Common myeloid progenitor, CD34-positive (primary cell): ENCODE measurements at regions of chr7 and their contacts with region 1.

Region 1: DNA sequence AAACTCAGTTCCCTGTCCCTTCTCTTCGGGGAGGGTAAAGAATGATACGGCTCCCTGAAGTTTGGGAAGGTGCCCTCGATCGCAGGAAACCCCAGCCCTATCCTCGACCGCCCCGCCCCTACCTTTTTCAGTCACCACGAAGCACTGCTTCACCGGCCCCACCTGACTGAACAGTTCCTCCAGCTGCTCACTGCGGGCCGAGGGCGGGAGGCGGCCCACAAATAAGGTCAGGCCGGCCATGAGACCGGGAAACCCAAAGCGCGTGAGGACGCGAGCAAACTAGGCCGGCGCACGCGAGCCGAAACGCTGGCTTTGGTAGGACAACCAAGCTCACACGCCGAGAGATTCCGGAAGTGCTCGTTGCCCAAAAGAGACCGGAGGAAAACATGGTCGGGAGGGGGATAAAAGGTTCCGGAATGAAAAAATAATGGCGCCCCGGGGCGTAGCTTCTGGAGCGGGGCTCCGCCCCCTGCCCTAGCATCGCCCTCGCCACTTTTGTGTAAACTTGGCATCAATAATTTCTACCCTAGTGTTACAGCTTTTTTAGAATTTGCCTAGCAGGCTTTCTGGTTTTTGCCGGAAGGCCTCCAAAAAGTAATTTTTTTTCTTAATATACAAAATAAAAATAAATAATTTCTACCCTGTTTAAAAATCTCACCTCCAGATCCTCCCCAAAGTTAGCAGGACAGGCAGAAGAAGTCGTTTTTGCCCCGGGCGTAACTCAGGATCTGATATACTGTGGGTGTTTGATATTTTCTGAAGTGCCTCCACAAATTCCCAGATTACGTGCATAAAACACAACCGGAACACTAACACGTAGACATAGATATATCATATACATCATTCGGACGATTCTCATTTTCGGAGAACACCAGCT is at the start of gene RBM28:
- DNase-seq: peak; percentile 94 to 97 (median 97)
- H3K4me3 ChIP-seq: peak within 1 kb of the TSS; percentile 47 to 96 (median 90)
- H3K27ac ChIP-seq: peak within 1 kb of the TSS; percentile 72 to 92
- H3K4me1 ChIP-seq: peaks cover 12 to 27% (median 17%) of the 10 kb centered on the region in 4 experiments
- H3K27me3 ChIP-seq: peaks cover 0 to 3% (median 1%) of the 10 kb centered on the region in 5 experiments

Region 2: GRCh38 chr7:128104035-128104742 is 239.6 kb before region 1 on chr7:
- CTCF ChIA-PET with region 1: no interaction called
- POLR2A ChIA-PET with region 1: no interaction called
- DNase-seq: peak in 2 of 3 donors; percentile 54 to 65
- H3K4me3 ChIP-seq: peak overlapping the region in 6 of 7 experiments; percentile 2 to 53 (median 32)
- H3K27ac ChIP-seq: no peak overlapping the region
- H3K4me1 ChIP-seq: peaks cover 9 to 34% (median 24%) of the 10 kb centered on the region in 4 experiments
- H3K27me3 ChIP-seq: peaks cover 0 to 61% (median 17%) of the 10 kb centered on the region in 5 experiments

Region 3: DNA sequence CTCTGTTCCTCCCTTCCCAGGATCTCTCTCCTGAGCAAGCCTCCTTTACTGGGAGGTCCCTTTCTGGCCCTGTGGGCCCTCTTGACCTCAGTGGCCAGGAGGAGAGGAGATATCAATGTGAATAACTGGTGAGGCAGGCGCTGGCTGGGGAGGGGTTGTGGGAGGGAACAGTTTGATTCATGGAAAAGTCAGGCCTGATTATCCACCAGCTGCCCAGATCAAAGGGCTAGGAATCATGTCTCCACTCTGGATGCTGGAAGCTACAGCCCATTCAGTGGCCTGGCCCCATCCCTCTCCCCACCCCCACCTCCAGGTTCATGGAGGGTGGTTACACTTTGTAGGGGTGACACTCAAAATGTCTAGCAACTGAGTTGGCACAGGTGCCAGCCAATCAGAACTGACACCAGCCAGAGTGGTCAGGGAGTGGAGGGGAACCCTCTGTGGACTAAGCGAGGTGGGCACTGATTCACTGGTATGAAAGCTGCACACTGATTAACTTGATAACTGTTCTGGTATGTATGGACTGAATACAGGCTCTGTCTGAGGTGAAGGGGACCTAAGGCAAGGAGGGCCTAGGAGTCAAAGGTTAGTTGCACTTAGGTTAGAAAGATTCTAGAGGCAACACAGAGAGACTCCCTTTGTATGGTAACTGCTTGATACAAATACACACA is 12.9 kb after region 1 on chr7:
- CTCF ChIA-PET with region 1: interaction called, 16 read pairs
- POLR2A ChIA-PET with region 1: no interaction called
- DNase-seq: no peak
- H3K4me3 ChIP-seq: no peak overlapping the region
- H3K27ac ChIP-seq: no peak overlapping the region
- H3K4me1 ChIP-seq: peaks cover 3 to 21% (median 19%) of the 10 kb centered on the region in 4 experiments
- H3K27me3 ChIP-seq: peaks cover 3 to 42% (median 17%) of the 10 kb centered on the region in 5 experiments

Region 4: GRCh38 chr7:128373606-128374005 is 29.8 kb after region 1 on chr7:
- CTCF ChIA-PET with region 1: interaction called, 440 read pairs
- POLR2A ChIA-PET with region 1: interaction called, 6 read pairs
- DNase-seq: no peak
- H3K4me3 ChIP-seq: no peak overlapping the region
- H3K27ac ChIP-seq: no peak overlapping the region
- H3K4me1 ChIP-seq: peaks cover 0 to under 1% (median under 1%) of the 10 kb centered on the region in 4 experiments
- H3K27me3 ChIP-seq: no peaks in the 10 kb centered on the region

Region 5: DNA sequence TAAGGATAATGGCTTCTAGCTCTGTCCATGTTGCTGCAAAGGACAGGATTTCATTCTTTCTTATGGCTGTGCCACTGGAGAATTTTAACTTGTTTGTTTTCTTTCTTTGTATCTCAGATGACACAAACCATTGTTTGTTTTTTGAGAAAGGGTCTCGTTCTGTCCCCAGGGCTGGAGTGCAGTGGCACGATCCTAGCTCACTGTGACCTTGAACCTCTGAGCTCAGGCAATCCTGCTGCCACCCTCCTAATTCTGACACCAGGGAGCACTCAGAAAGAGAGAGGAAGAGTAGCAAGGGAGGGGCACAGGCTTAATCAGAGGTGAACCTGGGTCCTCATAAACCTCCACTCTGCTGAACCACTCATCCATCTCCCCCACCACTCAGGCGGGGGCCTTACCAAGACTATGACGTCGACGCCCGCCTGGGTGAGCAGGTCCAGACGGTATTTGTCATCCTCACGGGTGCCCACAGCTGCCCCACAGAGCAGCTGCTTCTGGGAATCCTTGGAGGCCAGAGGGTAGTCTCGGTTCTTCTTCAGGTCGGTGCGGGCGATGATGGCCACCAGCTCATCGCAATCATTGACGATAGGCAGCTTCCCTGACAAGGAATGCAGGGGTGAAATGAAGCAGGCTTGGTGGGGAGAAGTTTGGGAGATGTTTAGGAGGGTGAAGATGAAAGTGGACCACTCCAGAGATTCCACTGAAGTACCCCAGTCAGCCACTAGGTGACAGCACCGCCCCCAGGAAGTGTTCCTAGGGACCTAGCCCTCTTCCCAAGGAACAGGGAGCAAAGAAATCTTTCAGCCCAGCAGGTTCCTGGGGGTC is 54.4 kb after region 1 on chr7:
- CTCF ChIA-PET with region 1: interaction called, 440 read pairs
- POLR2A ChIA-PET with region 1: no interaction called
- DNase-seq: no peak
- H3K4me3 ChIP-seq: no peak overlapping the region
- H3K27ac ChIP-seq: no peak overlapping the region
- H3K4me1 ChIP-seq: no peaks in the 10 kb centered on the region
- H3K27me3 ChIP-seq: no peaks in the 10 kb centered on the region

Region 6: GRCh38 chr7:128415217-128415785 is 71.5 kb after region 1 on chr7:
- CTCF ChIA-PET with region 1: interaction called, 36 read pairs
- POLR2A ChIA-PET with region 1: no interaction called
- DNase-seq: no peak
- H3K4me3 ChIP-seq: no peak overlapping the region
- H3K27ac ChIP-seq: no peak overlapping the region
- H3K4me1 ChIP-seq: peaks cover 4 to 6% (median 4%) of the 10 kb centered on the region in 4 experiments
- H3K27me3 ChIP-seq: no peaks in the 10 kb centered on the region

Region 7: GRCh38 chr7:128425850-128426249 is 82.1 kb after region 1 on chr7:
- CTCF ChIA-PET with region 1: interaction called, 186 read pairs
- POLR2A ChIA-PET with region 1: interaction called, 3 read pairs
- DNase-seq: peak; percentile 64 to 80 (median 66)
- H3K4me3 ChIP-seq: no peak overlapping the region
- H3K27ac ChIP-seq: no peak overlapping the region
- H3K4me1 ChIP-seq: peaks cover 0 to 10% (median 0%) of the 10 kb centered on the region in 4 experiments
- H3K27me3 ChIP-seq: no peaks in the 10 kb centered on the region